Pancreas (tissue), 10 donors: ENCODE measurements at regions of chr11 and their contacts with region 1.

Region 1: DNA sequence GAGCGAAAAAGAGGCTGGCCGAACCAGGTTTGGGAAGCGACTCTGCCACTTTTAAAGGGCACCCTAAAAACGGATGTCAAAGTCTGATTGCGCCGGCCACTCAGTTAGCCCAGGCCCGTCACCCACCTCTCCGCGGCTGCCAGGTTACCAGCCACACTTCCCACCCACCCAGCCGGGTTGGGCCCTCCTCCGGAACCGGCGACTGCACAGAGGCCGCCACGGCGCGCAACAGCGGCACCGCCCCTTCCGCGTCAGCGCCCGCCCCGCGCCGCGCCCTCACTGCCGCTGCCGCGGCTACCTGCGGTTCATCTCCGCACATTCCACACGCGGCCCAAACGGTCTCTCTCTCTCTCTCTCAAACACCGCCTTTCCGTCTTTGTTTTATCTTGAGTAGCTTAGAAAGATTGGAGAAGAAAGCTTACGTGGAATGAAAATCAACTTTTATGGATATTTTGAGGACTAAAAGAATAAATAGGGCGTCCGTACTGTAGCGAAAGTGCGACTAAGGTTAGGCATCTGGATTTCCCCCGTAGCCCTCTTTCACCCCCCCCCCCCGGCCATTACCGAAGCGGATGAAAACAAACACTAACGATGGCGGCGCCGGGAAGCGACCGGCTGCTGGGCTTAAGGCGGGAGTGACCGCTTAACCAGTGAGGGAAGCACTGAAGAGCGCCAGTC is at the starts of genes ATG13 and HARBI1:
- DNase-seq: peak; percentile 90 to 95 (median 91)
- ATAC-seq: peak; percentile 97 to 98 (median 98)
- H3K4me3 ChIP-seq: peak within 1 kb of the TSS; percentile 83 to 99 (median 97)
- H3K27ac ChIP-seq: peak within 1 kb of the TSS; percentile 89 to 98 (median 94)
- H3K4me1 ChIP-seq: peaks cover 0 to 31% (median 0%) of the 10 kb centered on the region in 3 donors
- H3K27me3 ChIP-seq: no peaks in the 10 kb centered on the region
- CTCF ChIP-seq: no peak
- total RNA-seq, gene ATG13: 34.0 to 59.6 (median 41.9) TPM
- total RNA-seq, gene HARBI1: 1.7 to 2.6 (median 2.2) TPM

Region 2: GRCh38 chr11:46489661-46490560 is 127.2 kb before region 1 on chr11:
- intact Hi-C with region 1: loop called in 1 of 3 experiments (anchors 5 kb)
- DNase-seq: peak in 1 of 6 donors; percentile 19
- ATAC-seq: peak in 3 of 4 donors; percentile 62 to 81 (median 70)
- H3K4me3 ChIP-seq: no peak overlapping the region
- H3K27ac ChIP-seq: no peak overlapping the region
- H3K4me1 ChIP-seq: no peaks in the 10 kb centered on the region
- H3K27me3 ChIP-seq: no peaks in the 10 kb centered on the region
- CTCF ChIP-seq: peak in 3 of 4 donors; percentile 12 to 22 (median 19)